Mammary epithelial cell (primary cell): ENCODE measurements at regions of chr4 and their contacts with region 1.

Region 1: GRCh38 chr4:47485047-47485692 is at the start of gene ATP10D:
- DNase-seq: peak; percentile 91
- H3K4me3 ChIP-seq: peak within 1 kb of the TSS; percentile 45 to 91 (median 79)
- H3K27ac ChIP-seq: peak within 1 kb of the TSS; percentile 85
- H3K4me1 ChIP-seq: peaks cover 25% of the 10 kb centered on the region
- H3K27me3 ChIP-seq: no peaks in the 10 kb centered on the region
- CTCF ChIP-seq: peak in 1 of 2 donors; percentile 36
- total RNA-seq, gene ATP10D: 71.6 to 88.4 TPM

Region 2: GRCh38 chr4:47463235-47463956 is 21.8 kb before region 1 on chr4 and contains the start of gene COMMD8:
- CTCF ChIA-PET with region 1: interaction called, 6 read pairs
- dilution Hi-C with region 1: no loop called
- in situ Hi-C with region 1: no loop called
- intact Hi-C with region 1: loop called (anchors 1 kb)
- DNase-seq: peak; percentile 94
- H3K4me3 ChIP-seq: peak within 1 kb of the TSS; percentile 64 to 79 (median 73)
- H3K27ac ChIP-seq: peak within 1 kb of the TSS; percentile 80
- H3K4me1 ChIP-seq: peaks cover 13% of the 10 kb centered on the region
- H3K27me3 ChIP-seq: no peaks in the 10 kb centered on the region
- CTCF ChIP-seq: peak in 1 of 2 donors; percentile 35
- total RNA-seq, gene COMMD8: 27.2 to 29.5 TPM

Region 3: GRCh38 chr4:48058284-48058962 is 573.3 kb after region 1 on chr4:
- CTCF ChIA-PET with region 1: no interaction called
- dilution Hi-C with region 1: no loop called
- in situ Hi-C with region 1: no loop called
- intact Hi-C with region 1: no loop called
- DNase-seq: peak; percentile 21
- H3K4me3 ChIP-seq: no peak overlapping the region
- H3K27ac ChIP-seq: no peak overlapping the region
- H3K4me1 ChIP-seq: no peaks in the 10 kb centered on the region
- H3K27me3 ChIP-seq: no peaks in the 10 kb centered on the region
- CTCF ChIP-seq: no peak